Activated CD8-positive, alpha-beta T cell treated with anti-CD3 and anti-CD28 coated beads, Interleukin-2, amount 10 ng/mL, durations not matched to agents 7 days and 5 days (primary cell): ENCODE measurements at regions of chr3 and their contacts with region 1.

Region 1: DNA sequence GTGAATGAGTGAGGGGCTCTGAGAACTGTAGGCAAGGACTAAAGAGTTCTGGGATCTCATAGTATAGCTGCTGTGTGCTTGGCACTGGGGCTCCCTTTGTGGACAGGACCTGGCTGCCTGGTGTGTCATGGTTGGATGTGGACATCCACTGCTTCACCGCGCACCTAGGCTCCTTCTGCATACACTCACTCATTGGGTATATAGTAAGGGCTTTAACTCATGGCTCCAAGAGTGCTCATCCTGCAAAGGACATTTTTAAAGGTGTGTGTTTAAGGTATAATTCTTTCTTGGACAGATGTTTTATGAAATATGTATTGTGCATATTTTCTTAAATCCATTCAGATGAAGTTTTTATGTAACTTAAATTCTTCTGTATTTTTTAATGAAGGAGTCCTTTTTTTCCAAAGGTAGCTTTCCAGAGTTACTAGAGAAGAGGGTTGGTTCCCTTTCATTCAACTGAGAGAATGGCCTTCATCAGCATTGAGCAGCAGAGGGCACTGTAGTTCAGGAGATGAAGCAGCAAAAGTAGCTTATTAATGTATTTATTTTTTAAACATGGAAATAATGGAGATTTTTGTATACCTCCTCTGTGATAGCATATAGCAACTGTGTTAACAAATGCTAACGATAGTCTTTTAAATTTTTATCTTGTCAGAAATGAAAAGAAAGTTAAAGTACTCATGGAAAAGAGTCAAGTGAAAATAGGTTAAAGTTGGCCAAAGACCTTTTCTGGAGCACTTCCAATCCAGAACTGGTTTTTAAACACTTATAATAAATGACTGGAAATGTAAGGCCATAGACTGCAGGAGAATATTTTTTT is 25.2 kb downstream of the OXNAD1 start:
- DNase-seq: peak; percentile 78
- ATAC-seq: peak; percentile 17
- H3K4me3 Mint-ChIP-seq: peak overlapping the region; percentile 92
- H3K27ac Mint-ChIP-seq: peak overlapping the region; percentile 88
- H3K4me1 Mint-ChIP-seq: peaks cover 55% of the 10 kb centered on the region
- H3K27me3 Mint-ChIP-seq: no peaks in the 10 kb centered on the region

Region 2: GRCh38 chr3:16247276-16248061 is 42.7 kb before region 1 on chr3:
- CTCF ChIA-PET with region 1: no interaction called
- POLR2A ChIA-PET with region 1: no interaction called
- DNase-seq: peak; percentile 86
- ATAC-seq: peak; percentile 90
- H3K4me3 Mint-ChIP-seq: no peak overlapping the region
- H3K27ac Mint-ChIP-seq: no peak overlapping the region
- H3K4me1 Mint-ChIP-seq: peaks cover 12% of the 10 kb centered on the region
- H3K27me3 Mint-ChIP-seq: no peaks in the 10 kb centered on the region

Region 3: GRCh38 chr3:16264708-16265454 is 25.3 kb before region 1 on chr3 and contains the starts of genes DPH3 and OXNAD1:
- CTCF ChIA-PET with region 1: interaction called, 114 read pairs
- POLR2A ChIA-PET with region 1: interaction called, 12 read pairs
- DNase-seq: peak; percentile 100
- ATAC-seq: peak; percentile 95
- H3K4me3 Mint-ChIP-seq: peak within 1 kb of the TSS; percentile 98
- H3K27ac Mint-ChIP-seq: peak within 1 kb of the TSS; percentile 98
- H3K4me1 Mint-ChIP-seq: peaks cover 30% of the 10 kb centered on the region
- H3K27me3 Mint-ChIP-seq: no peaks in the 10 kb centered on the region
- total RNA-seq, gene DPH3: 18.2 to 20.5 TPM
- total RNA-seq, gene OXNAD1: 68.2 to 69.1 TPM

Region 4: GRCh38 chr3:16300881-16301359 is 10.7 kb after region 1 on chr3:
- CTCF ChIA-PET with region 1: interaction called, 190 read pairs
- POLR2A ChIA-PET with region 1: interaction called, 15 read pairs
- DNase-seq: peak; percentile 82
- ATAC-seq: peak; percentile 80
- H3K4me3 Mint-ChIP-seq: peak overlapping the region; percentile 80
- H3K27ac Mint-ChIP-seq: peak overlapping the region; percentile 94
- H3K4me1 Mint-ChIP-seq: peaks cover 97% of the 10 kb centered on the region
- H3K27me3 Mint-ChIP-seq: no peaks in the 10 kb centered on the region

Region 5: DNA sequence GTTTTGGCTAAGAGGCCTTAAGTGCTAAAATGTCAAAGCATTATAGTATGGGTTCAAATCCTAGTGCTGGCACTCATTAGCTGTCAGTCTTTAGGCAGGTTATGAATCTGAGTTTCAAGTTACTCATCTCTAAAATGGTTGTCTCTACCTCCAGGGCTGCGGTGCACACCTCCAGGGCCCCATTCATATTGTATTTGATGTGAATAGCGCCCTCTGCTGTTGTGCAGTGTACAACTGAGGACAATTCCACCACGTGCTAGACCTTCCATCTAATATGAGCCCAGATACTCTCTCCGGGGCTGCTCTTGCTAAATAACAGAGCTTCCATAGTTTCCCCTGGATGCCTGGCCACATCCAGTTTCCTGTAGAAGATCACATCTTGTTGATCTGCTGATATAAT is 29.1 kb after region 1 on chr3:
- CTCF ChIA-PET with region 1: interaction called, 264 read pairs
- POLR2A ChIA-PET with region 1: interaction called, 18 read pairs
- DNase-seq: peak; percentile 91
- ATAC-seq: peak; percentile 85
- H3K4me3 Mint-ChIP-seq: peak overlapping the region; percentile 30
- H3K27ac Mint-ChIP-seq: peak overlapping the region; percentile 77
- H3K4me1 Mint-ChIP-seq: peaks cover 69% of the 10 kb centered on the region
- H3K27me3 Mint-ChIP-seq: no peaks in the 10 kb centered on the region

Region 6: GRCh38 chr3:16511681-16512434 is 221.6 kb after region 1 on chr3:
- CTCF ChIA-PET with region 1: interaction called, 17 read pairs
- POLR2A ChIA-PET with region 1: interaction called, 3 read pairs
- DNase-seq: peak; percentile 91
- ATAC-seq: peak; percentile 69
- H3K4me3 Mint-ChIP-seq: peak overlapping the region; percentile 94
- H3K27ac Mint-ChIP-seq: peak overlapping the region; percentile 85
- H3K4me1 Mint-ChIP-seq: peaks cover 84% of the 10 kb centered on the region
- H3K27me3 Mint-ChIP-seq: no peaks in the 10 kb centered on the region

Region 7: GRCh38 chr3:16550676-16551341 is 260.6 kb after region 1 on chr3:
- CTCF ChIA-PET with region 1: interaction called, 14 read pairs
- POLR2A ChIA-PET with region 1: no interaction called
- DNase-seq: peak; percentile 88
- ATAC-seq: peak; percentile 99
- H3K4me3 Mint-ChIP-seq: no peak overlapping the region
- H3K27ac Mint-ChIP-seq: peak overlapping the region; percentile 90
- H3K4me1 Mint-ChIP-seq: peaks cover 22% of the 10 kb centered on the region
- H3K27me3 Mint-ChIP-seq: peaks cover 11% of the 10 kb centered on the region